HEK293T (cell line): ENCODE measurements at regions of chr3 and their contacts with region 1.

Region 1: GRCh38 chr3:37974121-37975083 is 16.2 kb upstream of the VILL start:
- DNase-seq: peak; percentile 72

Region 2: GRCh38 chr3:37986479-37987314 is 12.3 kb after region 1 on chr3:
- CTCF ChIA-PET with region 1: interaction called, 19 read pairs
- POLR2A ChIA-PET with region 1: no interaction called
- DNase-seq: no peak

Region 3: DNA sequence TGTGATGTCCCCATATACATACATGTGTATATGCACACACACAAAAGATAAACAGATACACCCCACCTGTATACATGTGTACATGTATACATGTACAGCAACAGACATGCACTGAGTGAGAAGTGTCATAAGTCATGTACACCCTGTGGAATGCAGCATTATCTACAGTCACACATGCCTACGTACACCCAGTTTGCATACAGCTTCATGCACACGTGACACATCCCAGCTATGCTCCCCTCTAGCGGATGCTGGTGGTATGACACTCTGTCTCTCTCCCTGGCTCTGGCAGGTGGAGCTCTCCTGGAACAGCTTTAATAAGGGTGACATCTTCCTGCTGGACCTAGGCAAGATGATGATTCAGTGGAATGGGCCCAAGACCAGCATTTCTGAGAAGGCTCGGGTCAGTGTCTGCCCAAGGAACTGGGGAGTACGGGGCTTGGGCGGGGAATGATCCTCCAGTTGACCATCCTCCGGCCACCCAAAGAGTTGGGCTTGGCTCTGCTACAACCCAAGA is 22.4 kb after region 1 on chr3:
- CTCF ChIA-PET with region 1: interaction called, 16 read pairs
- POLR2A ChIA-PET with region 1: interaction called, 6 read pairs
- DNase-seq: peak; percentile 81